CD8-positive, alpha-beta T cell (primary cell): ENCODE measurements at regions of chr9 and their contacts with region 1.

Region 1: DNA sequence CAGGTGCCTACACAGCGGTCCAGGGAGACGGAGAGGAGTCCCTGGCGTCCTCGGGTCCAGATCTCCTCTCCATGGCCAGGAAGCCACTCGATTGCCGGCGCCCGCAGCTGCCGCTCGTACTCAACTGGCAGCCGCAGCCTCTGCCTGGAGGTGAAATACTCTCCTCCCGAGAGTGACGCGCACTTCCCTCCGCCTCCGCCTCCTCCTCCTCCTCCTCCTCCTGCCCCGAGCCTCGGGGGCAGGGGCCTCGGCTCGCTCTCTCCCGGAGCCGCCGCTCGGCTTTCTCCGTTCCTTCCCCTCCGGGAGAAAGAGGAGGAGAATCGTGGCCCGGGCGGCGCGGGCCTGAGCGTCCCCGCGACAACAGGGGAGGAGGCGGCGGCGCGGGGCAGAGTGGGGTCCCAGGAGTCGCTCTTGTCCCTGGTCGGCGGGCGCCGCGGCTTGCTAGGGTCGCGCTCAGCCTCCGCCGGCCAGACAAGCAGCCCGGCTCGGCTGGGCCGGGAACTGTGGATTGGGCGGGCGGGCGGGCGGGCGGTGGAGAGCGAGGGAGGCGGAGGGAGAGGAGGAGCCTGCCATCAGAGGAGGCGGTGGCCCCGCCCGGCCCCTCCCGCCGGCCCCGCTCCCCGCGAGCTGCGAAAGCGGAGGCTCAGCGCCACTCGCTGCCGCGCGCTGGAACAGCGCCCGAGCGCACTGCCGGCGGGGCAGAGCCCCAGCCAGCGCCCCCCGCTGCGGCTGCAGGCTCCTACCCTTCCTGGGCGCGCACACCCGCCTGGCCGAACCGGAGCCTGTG is at the start of gene CEMIP2:
- DNase-seq: peak; percentile 76 to 94 (median 89)
- ATAC-seq: peak; percentile 81
- H3K4me3 ChIP-seq: peak within 1 kb of the TSS; percentile 94 to 96
- H3K4me3 Mint-ChIP-seq: peak within 1 kb of the TSS; percentile 91
- H3K27ac ChIP-seq: peak within 1 kb of the TSS; percentile 87 to 96
- H3K27ac Mint-ChIP-seq: peak within 1 kb of the TSS; percentile 96
- H3K4me1 ChIP-seq: peaks cover 36% of the 10 kb centered on the region
- H3K4me1 Mint-ChIP-seq: peaks cover 44% of the 10 kb centered on the region
- H3K27me3 ChIP-seq: no peaks in the 10 kb centered on the region
- H3K27me3 Mint-ChIP-seq: no peaks in the 10 kb centered on the region
- CTCF ChIP-seq: peak; percentile 63
- total RNA-seq, gene CEMIP2: 286 to 313 TPM

Region 2: DNA sequence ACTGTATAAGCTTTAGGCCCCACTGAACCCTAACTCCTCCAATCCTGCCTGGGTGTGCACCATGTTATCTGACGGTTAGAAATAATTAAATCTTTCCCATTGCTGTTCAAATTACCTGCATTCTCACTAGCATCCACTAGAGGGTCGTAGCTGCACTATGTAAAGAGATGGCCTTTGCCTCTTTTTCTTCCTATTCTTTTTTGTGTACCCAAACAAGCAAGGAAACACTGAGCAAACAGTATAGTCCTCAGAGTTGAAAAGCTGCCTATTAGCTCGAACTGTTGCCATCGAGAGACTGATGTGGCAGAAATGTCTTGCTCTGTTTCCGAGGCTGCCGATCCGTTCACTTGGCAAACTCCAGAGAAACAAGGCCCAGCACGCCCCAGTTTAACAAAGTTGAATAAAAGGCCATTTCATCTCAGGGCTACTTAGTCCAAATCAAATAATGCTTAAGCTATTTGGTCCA is 483.4 kb before region 1 on chr9:
- CTCF ChIA-PET with region 1: no interaction called
- POLR2A ChIA-PET with region 1: no interaction called
- intact Hi-C with region 1: loop called (anchors 1 to 5 kb)
- DNase-seq: peak in 6 of 9 experiments; percentile 3 to 54 (median 27)
- ATAC-seq: peak; percentile 48
- H3K4me3 ChIP-seq: no peak overlapping the region
- H3K4me3 Mint-ChIP-seq: no peak overlapping the region
- H3K27ac ChIP-seq: no peak overlapping the region
- H3K27ac Mint-ChIP-seq: no peak overlapping the region
- H3K4me1 ChIP-seq: no peaks in the 10 kb centered on the region
- H3K4me1 Mint-ChIP-seq: no peaks in the 10 kb centered on the region
- H3K27me3 ChIP-seq: no peaks in the 10 kb centered on the region
- H3K27me3 Mint-ChIP-seq: peaks cover 11% of the 10 kb centered on the region
- CTCF ChIP-seq: peak; percentile 88

Region 3: GRCh38 chr9:71716138-71716909 is 52.3 kb before region 1 on chr9:
- CTCF ChIA-PET with region 1: interaction called, 5 read pairs
- POLR2A ChIA-PET with region 1: interaction called, 6 read pairs
- intact Hi-C with region 1: loop called (anchors 2 to 5 kb)
- DNase-seq: no peak
- ATAC-seq: no peak
- H3K4me3 ChIP-seq: no peak overlapping the region
- H3K4me3 Mint-ChIP-seq: no peak overlapping the region
- H3K27ac ChIP-seq: no peak overlapping the region
- H3K27ac Mint-ChIP-seq: no peak overlapping the region
- H3K4me1 ChIP-seq: no peaks in the 10 kb centered on the region
- H3K4me1 Mint-ChIP-seq: peaks cover 10% of the 10 kb centered on the region
- H3K27me3 ChIP-seq: no peaks in the 10 kb centered on the region
- H3K27me3 Mint-ChIP-seq: no peaks in the 10 kb centered on the region
- CTCF ChIP-seq: peak; percentile 77

Region 4: GRCh38 chr9:71783120-71783530 is 14.5 kb after region 1 on chr9:
- CTCF ChIA-PET with region 1: interaction called, 49 read pairs
- POLR2A ChIA-PET with region 1: interaction called, 46 read pairs
- intact Hi-C with region 1: loop called (anchors 1 kb)
- DNase-seq: peak; percentile 76 to 98 (median 85)
- ATAC-seq: peak; percentile 94
- H3K4me3 ChIP-seq: peak overlapping the region; percentile 4 to 10
- H3K4me3 Mint-ChIP-seq: peak overlapping the region; percentile 55
- H3K27ac ChIP-seq: peak overlapping the region; percentile 77 to 90
- H3K27ac Mint-ChIP-seq: peak overlapping the region; percentile 97
- H3K4me1 ChIP-seq: peaks cover 40% of the 10 kb centered on the region
- H3K4me1 Mint-ChIP-seq: peaks cover 47% of the 10 kb centered on the region
- H3K27me3 ChIP-seq: no peaks in the 10 kb centered on the region
- H3K27me3 Mint-ChIP-seq: no peaks in the 10 kb centered on the region
- CTCF ChIP-seq: peak; percentile 51

Region 5: DNA sequence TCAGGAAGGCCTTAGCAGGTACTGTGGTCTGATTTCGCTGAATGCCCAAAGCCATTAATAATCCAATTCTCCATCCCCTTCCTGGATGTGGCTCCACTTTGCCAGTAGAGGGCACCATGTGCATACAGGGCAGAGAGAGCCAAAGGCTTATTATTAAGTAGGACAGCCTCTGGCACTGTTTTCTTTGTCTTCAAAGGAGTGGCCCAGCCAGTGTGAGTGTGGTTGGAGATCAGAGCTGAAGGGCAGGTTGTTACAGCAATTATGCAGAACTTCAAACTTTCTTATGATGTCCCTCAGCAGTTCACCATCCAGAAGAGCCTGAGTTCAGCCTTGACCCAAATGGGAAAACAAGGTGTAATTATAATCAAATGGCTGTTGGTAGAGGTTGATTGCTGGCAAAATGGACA is 38.3 kb after region 1 on chr9:
- CTCF ChIA-PET with region 1: interaction called, 27 read pairs
- POLR2A ChIA-PET with region 1: interaction called, 7 read pairs
- intact Hi-C with region 1: loop called in 1 of 2 experiments (anchors 1 kb)
- DNase-seq: peak; percentile 12 to 80 (median 62)
- ATAC-seq: peak; percentile 96
- H3K4me3 ChIP-seq: no peak overlapping the region
- H3K4me3 Mint-ChIP-seq: no peak overlapping the region
- H3K27ac ChIP-seq: no peak overlapping the region
- H3K27ac Mint-ChIP-seq: peak overlapping the region; percentile 27
- H3K4me1 ChIP-seq: peaks cover 6% of the 10 kb centered on the region
- H3K4me1 Mint-ChIP-seq: peaks cover 15% of the 10 kb centered on the region
- H3K27me3 ChIP-seq: no peaks in the 10 kb centered on the region
- H3K27me3 Mint-ChIP-seq: no peaks in the 10 kb centered on the region
- CTCF ChIP-seq: peak; percentile 91

Region 6: GRCh38 chr9:72022841-72023240 is 254.3 kb after region 1 on chr9:
- CTCF ChIA-PET with region 1: interaction called, 14 read pairs
- POLR2A ChIA-PET with region 1: no interaction called
- intact Hi-C with region 1: no loop called
- DNase-seq: no peak
- ATAC-seq: no peak
- H3K4me3 ChIP-seq: no peak overlapping the region
- H3K4me3 Mint-ChIP-seq: no peak overlapping the region
- H3K27ac ChIP-seq: no peak overlapping the region
- H3K27ac Mint-ChIP-seq: no peak overlapping the region
- H3K4me1 ChIP-seq: no peaks in the 10 kb centered on the region
- H3K4me1 Mint-ChIP-seq: peaks cover 3% of the 10 kb centered on the region
- H3K27me3 ChIP-seq: no peaks in the 10 kb centered on the region
- H3K27me3 Mint-ChIP-seq: no peaks in the 10 kb centered on the region
- CTCF ChIP-seq: no peak

Region 7: DNA sequence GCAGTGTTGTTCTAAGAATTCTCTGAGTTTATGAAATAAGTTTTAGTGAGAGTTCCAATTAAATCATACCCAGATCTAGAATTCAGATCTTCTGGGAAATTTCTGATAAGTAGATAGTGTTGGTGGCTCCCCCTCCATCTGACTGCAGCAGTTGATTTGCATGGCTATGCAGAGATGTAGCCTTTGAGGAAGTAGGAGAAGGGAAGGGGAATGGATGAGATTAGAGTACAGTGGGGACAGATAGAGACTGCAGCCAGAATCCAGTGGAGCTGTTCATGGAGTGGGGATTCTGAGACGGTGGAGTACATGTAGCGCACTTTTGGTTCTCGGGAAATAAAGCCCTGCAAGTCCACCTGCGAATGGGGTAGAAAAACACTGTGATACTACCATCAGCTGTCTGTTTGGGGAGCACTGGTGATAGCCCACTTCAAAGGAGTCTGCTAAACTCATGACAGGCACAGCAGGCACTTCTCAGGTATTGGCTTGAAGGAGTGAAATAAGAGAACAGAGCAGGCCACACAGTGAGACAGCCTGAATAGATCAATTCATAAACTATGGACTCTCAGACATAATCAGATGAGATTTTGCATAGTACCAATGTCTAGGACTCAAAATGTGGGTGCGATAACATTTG is 1087.4 kb after region 1 on chr9:
- CTCF ChIA-PET with region 1: no interaction called
- POLR2A ChIA-PET with region 1: no interaction called
- intact Hi-C with region 1: no loop called
- DNase-seq: no peak
- ATAC-seq: no peak
- H3K4me3 ChIP-seq: no peak overlapping the region
- H3K4me3 Mint-ChIP-seq: no peak overlapping the region
- H3K27ac ChIP-seq: no peak overlapping the region
- H3K27ac Mint-ChIP-seq: no peak overlapping the region
- H3K4me1 ChIP-seq: no peaks in the 10 kb centered on the region
- H3K4me1 Mint-ChIP-seq: no peaks in the 10 kb centered on the region
- H3K27me3 ChIP-seq: no peaks in the 10 kb centered on the region
- H3K27me3 Mint-ChIP-seq: no peaks in the 10 kb centered on the region
- CTCF ChIP-seq: no peak